ENCODE measurements at regions of chr22 and their contacts with region 1.

Region 1: GRCh38 chr22:20090348-20091240 is 10.6 kb downstream of the DGCR8 start:
- DNase-seq: peak in 1 of 9 experiments; percentile 56
- ATAC-seq: peak; percentile 27
- H3K4me3 ChIP-seq: no peak overlapping the region
- H3K4me3 Mint-ChIP-seq: peak overlapping the region; percentile 66
- H3K27ac ChIP-seq: peak overlapping the region; percentile 2 to 39
- H3K27ac Mint-ChIP-seq: peak overlapping the region; percentile 91
- H3K4me1 ChIP-seq: peaks cover 50% of the 10 kb centered on the region
- H3K4me1 Mint-ChIP-seq: peaks cover 68% of the 10 kb centered on the region
- H3K27me3 ChIP-seq: no peaks in the 10 kb centered on the region
- H3K27me3 Mint-ChIP-seq: no peaks in the 10 kb centered on the region
- CTCF ChIP-seq: no peak

Region 2: GRCh38 chr22:20063271-20064139 is 27.1 kb before region 1 on chr22:
- CTCF ChIA-PET with region 1: no interaction called
- POLR2A ChIA-PET with region 1: no interaction called
- intact Hi-C with region 1: no loop called
- DNase-seq: no peak
- ATAC-seq: no peak
- H3K4me3 ChIP-seq: no peak overlapping the region
- H3K4me3 Mint-ChIP-seq: no peak overlapping the region
- H3K27ac ChIP-seq: peak overlapping the region in 1 of 2 experiments; percentile 10
- H3K27ac Mint-ChIP-seq: no peak overlapping the region
- H3K4me1 ChIP-seq: no peaks in the 10 kb centered on the region
- H3K4me1 Mint-ChIP-seq: peaks cover 6% of the 10 kb centered on the region
- H3K27me3 ChIP-seq: no peaks in the 10 kb centered on the region
- H3K27me3 Mint-ChIP-seq: no peaks in the 10 kb centered on the region
- CTCF ChIP-seq: no peak

Region 3: GRCh38 chr22:20111045-20111688 is 20.6 kb after region 1 on chr22:
- CTCF ChIA-PET with region 1: interaction called, 26 read pairs
- POLR2A ChIA-PET with region 1: interaction called, 3 read pairs
- intact Hi-C with region 1: no loop called
- DNase-seq: peak in 3 of 9 experiments; percentile 51 to 76 (median 68)
- ATAC-seq: peak; percentile 77
- H3K4me3 ChIP-seq: no peak overlapping the region
- H3K4me3 Mint-ChIP-seq: no peak overlapping the region
- H3K27ac ChIP-seq: peak overlapping the region in 1 of 2 experiments; percentile 43
- H3K27ac Mint-ChIP-seq: peak overlapping the region; percentile 75
- H3K4me1 ChIP-seq: peaks cover 23% of the 10 kb centered on the region
- H3K4me1 Mint-ChIP-seq: peaks cover 19% of the 10 kb centered on the region
- H3K27me3 ChIP-seq: no peaks in the 10 kb centered on the region
- H3K27me3 Mint-ChIP-seq: no peaks in the 10 kb centered on the region
- CTCF ChIP-seq: peak; percentile 38

Measured in CD8-positive, alpha-beta T cell (primary cell).